ENCODE measurements at regions of chr11 and their contacts with region 1.

Region 1: DNA sequence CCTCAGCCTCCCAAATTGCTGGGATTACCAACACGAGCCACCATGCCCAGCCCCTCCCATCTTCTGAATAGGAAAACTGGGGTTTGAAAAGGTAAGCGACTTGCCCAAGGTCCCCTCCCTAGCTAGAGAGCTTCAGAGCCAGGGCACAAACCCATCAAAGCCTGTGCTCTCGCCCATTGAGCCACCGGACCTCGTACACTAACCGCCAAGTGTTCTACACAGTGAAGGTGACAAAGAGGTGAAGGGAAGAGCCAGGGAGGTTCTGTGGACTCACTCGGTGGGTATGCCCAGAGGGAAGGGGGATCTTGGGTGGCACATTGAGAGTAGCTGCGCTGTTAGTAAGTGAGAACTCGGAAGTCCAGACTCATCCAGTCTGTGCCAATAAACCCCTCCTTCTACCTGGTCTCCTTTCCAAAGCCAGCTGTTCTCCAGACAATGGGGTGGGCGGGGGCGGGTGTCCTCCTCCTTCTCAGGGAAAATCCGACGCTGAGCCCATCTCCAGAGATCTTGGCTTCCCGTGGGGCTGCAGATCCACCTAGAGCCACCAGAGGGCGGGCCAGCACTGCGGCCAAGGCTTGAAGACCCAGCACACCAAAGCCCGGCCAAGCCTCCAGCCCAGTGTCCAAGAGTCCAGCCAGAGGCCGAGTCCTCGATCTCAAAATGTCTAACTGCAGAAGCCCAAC is 3.2 kb upstream of the RTN4RL2 start:
- DNase-seq: peak; percentile 59
- H3K4me3 ChIP-seq: no peak overlapping the region
- H3K27ac ChIP-seq: no peak overlapping the region
- H3K27me3 ChIP-seq: peaks cover 42% of the 10 kb centered on the region
- CTCF ChIP-seq: peak; percentile 98

Region 2: DNA sequence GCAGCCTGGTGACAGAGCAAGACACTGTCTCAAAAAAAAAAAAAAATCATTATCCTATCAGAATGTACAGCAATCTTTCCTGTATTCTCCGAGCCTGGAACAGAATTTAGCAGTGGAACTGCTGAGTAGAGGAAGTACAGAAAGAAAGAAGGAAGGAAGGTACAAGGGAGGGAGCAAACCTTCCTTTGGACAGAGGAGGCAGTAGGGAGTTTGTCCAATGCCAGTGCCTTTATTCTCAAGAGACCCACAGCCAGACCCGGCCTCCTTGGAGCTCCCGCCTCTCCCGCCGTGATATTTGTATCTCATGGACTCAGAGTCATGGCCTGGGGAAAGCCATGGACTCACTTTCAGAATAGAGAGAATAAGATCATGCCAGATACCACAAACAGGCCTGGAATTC is 313.0 kb before region 1 on chr11:
- CTCF ChIA-PET with region 1: no interaction called
- POLR2A ChIA-PET with region 1: no interaction called
- DNase-seq: no peak
- H3K4me3 ChIP-seq: no peak overlapping the region
- H3K27ac ChIP-seq: no peak overlapping the region
- H3K27me3 ChIP-seq: no peaks in the 10 kb centered on the region
- CTCF ChIP-seq: no peak

Region 3: GRCh38 chr11:57426929-57427726 is 30.0 kb before region 1 on chr11 and contains the start of gene SLC43A3:
- CTCF ChIA-PET with region 1: interaction called, 30 read pairs
- POLR2A ChIA-PET with region 1: interaction called, 13 read pairs
- DNase-seq: no peak
- H3K4me3 ChIP-seq: peak within 1 kb of the TSS; percentile 60
- H3K27ac ChIP-seq: peak within 1 kb of the TSS; percentile 91
- H3K27me3 ChIP-seq: no peaks in the 10 kb centered on the region
- CTCF ChIP-seq: no peak
- polyA plus RNA-seq, gene SLC43A3: 24.4 and 25.1 TPM in 2 replicates

Region 4: GRCh38 chr11:57444362-57445121 is 12.6 kb before region 1 on chr11:
- CTCF ChIA-PET with region 1: interaction called, 68 read pairs
- POLR2A ChIA-PET with region 1: no interaction called
- DNase-seq: no peak
- H3K4me3 ChIP-seq: no peak overlapping the region
- H3K27ac ChIP-seq: no peak overlapping the region
- H3K27me3 ChIP-seq: peaks cover 5% of the 10 kb centered on the region
- CTCF ChIP-seq: no peak

Region 5: DNA sequence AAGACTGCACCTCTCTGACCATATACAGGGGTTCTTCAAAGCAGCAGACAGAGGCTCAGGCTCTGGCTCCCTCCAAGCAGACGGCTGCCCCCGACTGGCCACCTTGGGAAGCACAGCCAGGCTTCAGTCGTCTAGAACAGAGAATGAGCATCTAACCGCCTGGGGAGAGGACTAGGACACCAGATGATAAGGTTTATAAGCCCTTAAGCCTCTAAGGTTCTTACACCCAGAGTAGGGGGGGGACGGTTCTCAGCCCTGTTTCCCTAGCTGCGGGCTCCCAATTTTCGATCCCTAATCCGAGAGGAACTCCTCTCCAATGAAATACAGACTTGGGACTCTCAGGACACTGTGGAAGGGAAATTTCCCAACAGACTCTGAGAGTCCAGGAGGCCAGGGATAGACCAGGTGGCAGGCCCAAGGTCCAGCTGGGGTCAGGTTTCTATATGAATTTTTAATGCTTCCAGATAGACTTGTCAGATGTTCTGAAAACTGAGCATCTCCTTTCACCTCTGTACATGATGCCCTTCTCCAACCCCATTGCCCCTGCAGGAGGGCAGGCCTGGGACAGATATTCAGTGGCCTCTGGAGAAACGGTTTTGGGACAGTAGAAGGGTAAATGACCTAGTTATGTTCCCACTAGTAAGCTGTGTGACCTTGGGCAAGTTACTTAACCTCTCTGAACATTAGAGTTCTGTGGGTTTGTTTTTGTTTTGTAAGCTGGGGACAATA is 23.5 kb after region 1 on chr11:
- CTCF ChIA-PET with region 1: interaction called, 115 read pairs
- POLR2A ChIA-PET with region 1: no interaction called
- DNase-seq: no peak
- H3K4me3 ChIP-seq: no peak overlapping the region
- H3K27ac ChIP-seq: no peak overlapping the region
- H3K27me3 ChIP-seq: peaks cover 38% of the 10 kb centered on the region
- CTCF ChIP-seq: peak; percentile 75

Region 6: GRCh38 chr11:57515332-57516060 is 58.4 kb after region 1 on chr11 and contains the start of gene SLC43A1:
- CTCF ChIA-PET with region 1: interaction called, 34 read pairs
- POLR2A ChIA-PET with region 1: interaction called, 5 read pairs
- DNase-seq: no peak
- H3K4me3 ChIP-seq: peak within 1 kb of the TSS; percentile 85
- H3K27ac ChIP-seq: peak within 1 kb of the TSS; percentile 57
- H3K27me3 ChIP-seq: no peaks in the 10 kb centered on the region
- CTCF ChIP-seq: no peak
- polyA plus RNA-seq, gene SLC43A1: 14.6 and 17.5 TPM in 2 replicates

Region 7: GRCh38 chr11:57552479-57552878 is 95.4 kb after region 1 on chr11:
- CTCF ChIA-PET with region 1: interaction called, 16 read pairs
- POLR2A ChIA-PET with region 1: no interaction called
- DNase-seq: no peak
- H3K4me3 ChIP-seq: no peak overlapping the region
- H3K27ac ChIP-seq: no peak overlapping the region
- H3K27me3 ChIP-seq: no peaks in the 10 kb centered on the region
- CTCF ChIP-seq: no peak